Gastrocnemius medialis (tissue), 4 donors: ENCODE measurements at regions of chr2 and their contacts with region 1.

Region 1: GRCh38 chr2:236569573-236569973 is at the start of gene ACKR3:
- DNase-seq: peak; percentile 64 to 78
- ATAC-seq: peak; percentile 74 to 75
- H3K4me3 ChIP-seq: peak within 1 kb of the TSS; percentile 55 to 73 (median 58)
- H3K27ac ChIP-seq: peak within 1 kb of the TSS; percentile 76 to 80 (median 77)
- H3K4me1 ChIP-seq: peaks cover 37 to 38% of the 10 kb centered on the region in 2 donors
- H3K27me3 ChIP-seq: no peaks in the 10 kb centered on the region
- CTCF ChIP-seq: peak in 4 of 5 experiments; percentile 23 to 39 (median 36)
- POLR2A ChIP-seq: peak; percentile 64 to 72
- total RNA-seq, gene ACKR3: 7.1 to 55.0 (median 15.2) TPM

Region 2: DNA sequence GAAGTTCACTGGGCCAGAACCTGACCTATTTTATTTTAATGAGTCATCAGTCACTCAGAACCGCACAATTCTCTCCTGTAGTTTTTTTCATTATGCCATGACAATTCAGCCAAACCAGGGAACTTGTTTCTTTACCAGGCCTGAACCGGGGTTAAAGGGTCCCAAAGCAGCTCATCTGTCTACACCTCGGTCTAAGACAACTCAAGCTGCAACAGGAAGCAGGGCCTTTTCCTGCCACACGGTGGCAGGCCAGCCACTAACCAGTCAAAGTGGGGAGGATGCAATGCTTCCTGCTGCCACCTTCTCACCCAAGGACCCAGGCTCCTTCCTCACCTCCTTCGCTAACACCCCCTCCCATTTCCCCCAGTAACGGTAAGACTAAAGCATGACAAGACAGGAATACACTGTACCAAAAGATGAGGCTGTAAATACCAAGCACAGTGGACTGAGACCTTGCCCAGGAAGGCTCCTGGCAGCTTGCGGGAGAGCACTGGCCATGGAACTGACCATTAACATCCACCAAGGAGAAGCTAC is 56.6 kb before region 1 on chr2:
- in situ Hi-C with region 1: no loop called
- intact Hi-C with region 1: loop called (anchors 1 kb)
- DNase-seq: peak in 1 of 2 donors; percentile 46
- ATAC-seq: peak; percentile 52 to 66
- H3K4me3 ChIP-seq: no peak overlapping the region
- H3K27ac ChIP-seq: no peak overlapping the region
- H3K4me1 ChIP-seq: peaks cover 0 to 3% of the 10 kb centered on the region in 2 donors
- H3K27me3 ChIP-seq: peaks cover 0 to 11% (median 3%) of the 10 kb centered on the region in 3 donors
- CTCF ChIP-seq: peak; percentile 68 to 84 (median 82)
- POLR2A ChIP-seq: no peak

Region 3: DNA sequence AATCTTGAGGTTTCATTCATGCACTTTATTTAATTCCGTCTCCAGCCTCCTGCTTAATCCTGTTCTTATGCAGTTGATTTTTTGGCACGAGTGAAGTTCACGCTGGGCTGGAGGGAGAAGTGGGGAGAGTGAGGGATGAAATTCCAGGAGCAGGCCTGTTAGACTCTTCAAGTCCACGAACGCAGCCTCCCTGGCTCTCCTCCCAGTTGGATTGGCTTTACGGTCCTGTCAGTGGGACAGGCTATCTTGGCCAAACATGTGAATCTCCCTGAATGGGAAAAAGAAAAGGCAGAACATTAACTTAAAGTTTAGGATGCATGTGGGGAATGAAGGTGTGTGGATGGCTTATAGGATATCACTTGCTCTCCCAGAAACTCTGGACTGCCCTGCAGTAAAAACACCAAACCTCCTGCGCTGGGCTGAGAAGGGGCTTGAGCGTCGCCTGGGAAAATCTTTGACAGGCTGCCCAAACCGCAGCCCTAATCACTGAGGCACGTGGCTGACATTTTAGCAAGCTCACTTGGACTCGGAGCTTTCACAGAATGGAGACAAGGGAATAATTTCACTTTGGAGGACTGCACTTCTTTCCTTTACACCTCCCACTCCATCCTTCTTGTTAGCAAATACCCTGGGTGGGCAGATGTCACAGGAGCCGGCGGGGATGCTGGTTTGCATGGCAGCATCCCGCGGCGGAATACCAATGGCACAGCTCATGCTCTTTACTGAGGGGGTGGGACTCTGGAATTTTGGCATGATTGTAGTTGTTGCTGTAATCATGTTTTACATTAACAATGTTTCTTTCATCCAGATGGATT is 93.9 kb after region 1 on chr2:
- in situ Hi-C with region 1: no loop called
- intact Hi-C with region 1: loop called (anchors 5 kb)
- DNase-seq: peak; percentile 35 to 62
- ATAC-seq: peak; percentile 36 to 45
- H3K4me3 ChIP-seq: no peak overlapping the region
- H3K27ac ChIP-seq: peak overlapping the region; percentile 56 to 73 (median 63)
- H3K4me1 ChIP-seq: peaks cover 13 to 17% of the 10 kb centered on the region in 2 donors
- H3K27me3 ChIP-seq: no peaks in the 10 kb centered on the region
- CTCF ChIP-seq: no peak
- POLR2A ChIP-seq: no peak

Region 4: DNA sequence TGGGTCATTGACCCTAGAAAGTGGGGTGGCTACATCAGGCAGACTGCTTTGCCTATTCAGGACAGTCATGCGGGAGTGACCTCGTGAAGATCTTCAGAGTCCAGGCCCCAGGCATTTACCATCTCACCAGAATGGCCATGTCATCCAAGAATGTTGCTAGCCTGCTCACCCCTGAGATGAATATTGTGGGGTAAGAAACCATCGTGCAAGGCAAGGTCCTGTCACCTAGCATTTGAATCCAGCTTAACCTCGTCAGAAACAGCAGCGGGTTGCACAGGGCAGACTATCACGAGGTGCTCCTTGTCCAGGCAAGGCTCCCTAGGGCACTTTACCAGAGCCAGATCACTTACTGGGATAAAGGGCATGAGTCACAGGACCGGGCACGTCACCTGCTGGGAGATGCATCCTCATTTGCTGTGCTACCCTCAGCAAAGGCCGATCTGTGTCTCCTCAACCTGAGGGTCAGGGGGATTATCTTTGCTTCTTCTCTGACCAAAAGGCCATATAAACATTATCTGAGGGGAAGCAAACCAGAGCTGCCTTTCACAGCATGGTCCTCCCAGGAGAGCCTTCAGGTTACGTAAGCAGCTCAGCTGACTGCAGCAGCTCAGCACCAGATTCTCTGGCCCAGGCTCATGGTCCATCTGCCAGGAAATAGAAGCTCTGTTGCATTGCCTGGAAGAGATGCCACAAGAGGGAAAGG is 162.5 kb after region 1 on chr2:
- in situ Hi-C with region 1: no loop called
- intact Hi-C with region 1: loop called (anchors 5 kb)
- DNase-seq: peak; percentile 85 to 96
- ATAC-seq: peak; percentile 93 to 95
- H3K4me3 ChIP-seq: peak overlapping the region in 1 of 4 donors; percentile 16
- H3K27ac ChIP-seq: peak overlapping the region; percentile 89 to 92 (median 90)
- H3K4me1 ChIP-seq: peaks cover 29 to 31% of the 10 kb centered on the region in 2 donors
- H3K27me3 ChIP-seq: no peaks in the 10 kb centered on the region
- CTCF ChIP-seq: peak in 1 of 5 experiments; percentile 15
- POLR2A ChIP-seq: no peak

Region 5: GRCh38 chr2:236871500-236872001 is 302.0 kb after region 1 on chr2:
- in situ Hi-C with region 1: no loop called
- intact Hi-C with region 1: loop called (anchors 5 kb)
- DNase-seq: peak; percentile 41 to 68
- ATAC-seq: peak; percentile 79 to 83
- H3K4me3 ChIP-seq: no peak overlapping the region
- H3K27ac ChIP-seq: peak overlapping the region; percentile 42 to 67 (median 54)
- H3K4me1 ChIP-seq: peaks cover 0 to 15% of the 10 kb centered on the region in 2 donors
- H3K27me3 ChIP-seq: no peaks in the 10 kb centered on the region
- CTCF ChIP-seq: no peak
- POLR2A ChIP-seq: no peak

Region 6: DNA sequence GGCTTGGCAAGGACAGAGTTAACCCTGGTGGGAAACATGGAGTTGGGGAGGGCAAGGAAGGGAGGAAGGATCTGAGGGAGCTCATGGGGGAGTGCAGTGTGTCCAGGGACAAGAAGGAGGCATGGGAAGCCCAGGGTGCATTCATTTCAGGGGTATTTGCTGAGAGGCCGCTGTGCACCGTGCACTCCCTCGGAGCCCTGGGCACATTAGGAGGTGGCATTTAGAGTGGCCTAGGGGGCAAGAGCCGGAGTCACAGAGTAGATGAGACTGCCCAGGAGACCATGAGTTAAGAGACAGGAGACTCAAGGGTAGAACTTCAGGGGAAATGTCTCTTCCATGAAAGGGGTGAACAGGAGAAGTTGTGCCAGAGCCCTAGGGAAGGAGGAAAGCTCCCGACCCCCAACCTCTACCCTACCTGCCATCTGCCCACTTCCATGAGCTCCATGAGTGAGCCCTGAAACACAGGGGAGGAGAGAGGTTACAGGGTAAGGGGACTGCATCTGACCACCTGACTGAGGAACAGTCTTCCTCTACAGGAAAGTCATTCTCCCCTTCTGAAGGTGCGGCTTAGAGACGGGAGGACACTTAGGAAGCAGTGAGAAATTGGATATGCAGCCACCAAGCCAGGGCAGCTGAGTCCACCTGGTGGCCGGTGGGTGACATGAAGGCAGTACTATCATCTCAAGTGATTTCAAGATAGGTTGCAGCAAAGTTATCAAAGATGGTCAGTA is 457.6 kb after region 1 on chr2:
- in situ Hi-C with region 1: no loop called
- intact Hi-C with region 1: loop called (anchors 2 kb)
- DNase-seq: peak; percentile 54 to 73
- ATAC-seq: peak; percentile 69 to 88
- H3K4me3 ChIP-seq: no peak overlapping the region
- H3K27ac ChIP-seq: no peak overlapping the region
- H3K4me1 ChIP-seq: no peaks in the 10 kb centered on the region
- H3K27me3 ChIP-seq: no peaks in the 10 kb centered on the region
- CTCF ChIP-seq: peak; percentile 81 to 91 (median 83)
- POLR2A ChIP-seq: no peak